Gastrocnemius medialis (tissue), 4 donors: ENCODE measurements at regions of chr5 and their contacts with region 1.

Region 1: DNA sequence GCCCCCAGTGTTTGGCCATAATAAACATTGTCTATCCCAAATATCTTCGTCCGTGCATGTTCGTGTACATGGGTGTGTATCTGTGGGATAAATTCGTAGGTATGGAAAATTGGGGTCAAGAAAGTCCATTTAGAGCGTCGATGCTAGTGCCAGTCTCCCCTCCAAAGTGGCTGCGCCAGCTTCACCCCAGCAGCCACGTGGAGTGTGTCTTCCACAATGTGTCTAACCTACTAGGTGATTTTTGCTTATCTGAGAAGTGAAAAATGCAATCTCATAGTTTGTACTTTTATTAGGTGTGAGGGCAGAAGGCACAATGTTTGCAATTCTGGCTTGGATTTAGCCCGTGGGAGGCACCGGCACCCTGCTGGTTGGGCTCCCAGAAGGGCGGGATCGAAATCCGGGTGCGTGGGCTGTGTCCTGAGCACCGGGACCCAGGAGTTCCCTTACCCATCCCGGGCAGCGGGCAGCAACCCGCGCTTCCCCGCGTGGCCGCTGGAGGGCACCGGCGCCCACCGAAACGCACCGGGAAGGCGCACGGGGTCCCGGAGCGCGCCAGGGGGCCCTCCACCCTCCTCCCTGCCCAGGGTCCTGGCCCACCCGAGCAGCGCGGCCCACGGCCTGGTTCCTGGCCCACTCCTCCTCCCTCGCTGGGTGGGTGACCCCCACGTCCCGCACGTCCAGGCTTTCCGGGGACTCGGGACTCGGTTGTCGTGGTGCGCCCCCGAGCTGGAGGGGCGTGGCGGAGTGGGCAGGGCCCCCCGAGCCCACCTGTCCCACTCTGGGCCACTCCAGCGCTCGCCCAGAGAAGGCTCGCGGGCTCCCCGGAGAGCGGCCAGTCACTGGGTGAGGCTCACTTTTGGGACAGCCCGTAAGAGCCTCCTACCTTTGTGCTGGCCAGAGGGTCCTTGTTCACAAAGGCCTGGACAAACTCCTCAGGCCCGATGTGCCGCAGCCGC is 55.4 kb upstream of the RNF130 start:
- DNase-seq: no peak
- ATAC-seq: no peak
- H3K4me3 ChIP-seq: no peak overlapping the region
- H3K27ac ChIP-seq: no peak overlapping the region
- H3K4me1 ChIP-seq: no peaks in the 10 kb centered on the region
- H3K27me3 ChIP-seq: peaks cover 0 to 22% (median 8%) of the 10 kb centered on the region in 3 donors
- CTCF ChIP-seq: peak; percentile 25 to 71 (median 55)
- POLR2A ChIP-seq: no peak

Region 2: DNA sequence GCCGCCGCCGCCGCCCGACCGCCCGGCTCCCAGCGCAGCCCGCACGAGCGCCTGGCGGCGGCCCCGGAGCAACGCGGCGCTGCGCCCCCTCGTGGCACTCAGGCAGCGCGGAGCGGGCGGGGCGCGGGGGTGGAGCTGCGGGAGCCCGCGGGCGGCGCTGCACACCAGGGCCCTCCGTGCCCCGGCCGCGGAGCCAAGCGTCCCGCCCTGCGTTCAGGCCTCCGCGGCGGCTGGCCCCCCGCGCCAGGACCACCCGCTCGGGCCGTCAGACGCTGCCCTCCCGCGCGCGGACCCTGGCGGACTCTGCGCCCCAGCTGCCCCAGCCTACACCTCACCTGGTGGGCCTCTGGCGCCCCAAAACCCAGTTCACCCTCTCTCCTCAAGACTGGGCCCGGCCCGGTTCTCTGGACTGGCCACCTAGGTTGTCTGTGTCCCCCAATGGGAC is 82.2 kb after region 1 on chr5 and contains the start of gene RASGEF1C:
- in situ Hi-C with region 1: no loop called
- intact Hi-C with region 1: loop called (anchors 5 kb)
- DNase-seq: no peak
- ATAC-seq: peak; percentile 65 to 76
- H3K4me3 ChIP-seq: peak within 1 kb of the TSS in 3 of 4 donors; percentile 17 to 25 (median 23)
- H3K27ac ChIP-seq: no peak within 1 kb of the TSS
- H3K4me1 ChIP-seq: no peaks in the 10 kb centered on the region
- H3K27me3 ChIP-seq: peaks cover 14 to 19% (median 18%) of the 10 kb centered on the region in 3 donors
- CTCF ChIP-seq: peak in 2 of 5 experiments; percentile 26 to 50
- POLR2A ChIP-seq: no peak
- total RNA-seq, gene RASGEF1C: not detected

Region 3: GRCh38 chr5:180470966-180471582 is 344.1 kb after region 1 on chr5:
- in situ Hi-C with region 1: no loop called
- intact Hi-C with region 1: loop called (anchors 5 kb)
- DNase-seq: peak; percentile 20 to 22
- ATAC-seq: peak; percentile 41 to 51
- H3K4me3 ChIP-seq: no peak overlapping the region
- H3K27ac ChIP-seq: no peak overlapping the region
- H3K4me1 ChIP-seq: no peaks in the 10 kb centered on the region
- H3K27me3 ChIP-seq: no peaks in the 10 kb centered on the region
- CTCF ChIP-seq: peak; percentile 64 to 90 (median 81)
- POLR2A ChIP-seq: no peak